ENCODE measurements at regions of chr21 and their contacts with region 1.

Region 1: DNA sequence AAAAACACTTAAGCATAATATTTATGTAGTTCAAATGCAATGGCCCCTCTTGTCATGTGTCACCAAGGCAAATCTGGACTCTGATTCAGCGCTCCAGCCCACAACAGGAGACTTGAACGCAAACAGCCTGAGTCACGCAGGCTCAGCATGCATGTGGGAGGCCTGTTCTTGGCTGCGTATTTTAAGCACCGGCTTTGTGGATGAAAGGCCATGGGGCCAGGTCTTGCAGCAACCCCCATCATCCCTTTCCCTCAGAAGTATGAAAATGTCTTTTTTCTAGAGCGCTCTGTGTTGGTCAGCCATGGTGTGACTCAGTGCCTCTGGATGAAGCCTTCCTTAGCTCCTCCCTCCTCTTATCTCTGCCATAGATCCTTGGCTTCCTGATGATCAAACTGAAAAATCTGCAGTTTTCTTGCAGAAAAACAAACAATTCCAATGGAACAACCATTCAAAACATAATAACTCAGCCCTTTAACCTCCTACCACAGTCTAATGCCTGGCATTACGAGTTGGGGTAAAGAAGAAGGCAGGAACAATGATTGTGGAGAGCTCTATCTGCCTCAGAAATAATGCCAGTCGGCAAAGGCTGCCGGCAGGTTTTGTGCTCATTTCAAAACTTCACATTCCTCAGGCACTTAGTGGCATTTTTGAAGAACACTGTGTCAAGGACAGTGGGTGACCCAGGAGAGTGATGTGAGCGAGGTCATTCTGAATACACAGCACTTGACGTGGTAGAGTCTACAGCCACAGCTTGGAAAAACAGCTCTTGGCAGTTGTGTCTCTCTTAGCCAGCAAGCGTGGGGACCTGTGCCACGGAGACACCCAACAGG is 167.5 kb downstream of the CLIC6 start:
- DNase-seq: peak; percentile 60 to 94
- ATAC-seq: peak; percentile 95 to 97
- H3K4me3 ChIP-seq: peak overlapping the region; percentile 44
- H3K27ac ChIP-seq: peak overlapping the region; percentile 90 to 92
- H3K4me1 ChIP-seq: peaks cover 35% of the 10 kb centered on the region
- CTCF ChIP-seq: no peak
- EP300 ChIP-seq: peak; percentile 66 to 85; a peak in 2 of 5 replicates
- POLR2A ChIP-seq: no peak
- RAD21 ChIP-seq: peak; percentile 3 to 21; a peak in 1 of 5 replicates

Region 2: GRCh38 chr21:34807146-34807880 is 29.0 kb before region 1 on chr21:
- CTCF ChIA-PET with region 1: interaction called, 4 read pairs
- POLR2A ChIA-PET with region 1: interaction called, 15 read pairs
- DNase-seq: peak; percentile 78 to 90
- ATAC-seq: peak; percentile 92 to 94
- H3K4me3 ChIP-seq: no peak overlapping the region
- H3K27ac ChIP-seq: peak overlapping the region; percentile 95 to 97
- H3K4me1 ChIP-seq: peaks cover 54% of the 10 kb centered on the region
- CTCF ChIP-seq: no peak
- EP300 ChIP-seq: peak in 1 of 2 experiments; percentile 57; a peak in 2 of 5 replicates
- POLR2A ChIP-seq: no peak
- RAD21 ChIP-seq: 0 out of 5 replicates have a peak, but pooled peaks of 1 of the 2 experiments have one; percentile 12

Region 3: GRCh38 chr21:34812504-34813265 is 23.6 kb before region 1 on chr21:
- CTCF ChIA-PET with region 1: interaction called, 4 read pairs
- POLR2A ChIA-PET with region 1: interaction called, 15 read pairs
- DNase-seq: peak in 1 of 2 experiments; percentile 74
- ATAC-seq: peak; percentile 57 to 62; a peak in 5 of 6 replicates
- H3K4me3 ChIP-seq: no peak overlapping the region; the same call in 2 of the 3 replicates
- H3K27ac ChIP-seq: peak overlapping the region; percentile 95 to 97
- H3K4me1 ChIP-seq: peaks cover 78% of the 10 kb centered on the region
- CTCF ChIP-seq: no peak
- EP300 ChIP-seq: peak in 1 of 2 experiments; percentile 79; a peak in 3 of 5 replicates
- POLR2A ChIP-seq: no peak
- RAD21 ChIP-seq: no peak; a peak in 1 of 5 replicates

Measured in A549 (cell line).